Activated B cell treated with CpG ODN at 0.5 μM for 24 hours (primary cell): ENCODE measurements at regions of chr17 and their contacts with region 1.

Region 1: GRCh38 chr17:38421871-38422827 is 6.1 kb upstream of the ARHGAP23 start:
- DNase-seq: no peak
- ATAC-seq: no peak
- H3K4me3 Mint-ChIP-seq: no peak overlapping the region
- H3K27ac Mint-ChIP-seq: no peak overlapping the region
- H3K4me1 Mint-ChIP-seq: peaks cover 8% of the 10 kb centered on the region
- H3K27me3 Mint-ChIP-seq: peaks cover 67% of the 10 kb centered on the region
- CTCF ChIP-seq: no peak

Region 2: GRCh38 chr17:38464723-38465390 is 42.7 kb after region 1 on chr17:
- CTCF ChIA-PET with region 1: no interaction called
- POLR2A ChIA-PET with region 1: no interaction called
- intact Hi-C with region 1: no loop called
- DNase-seq: no peak
- ATAC-seq: no peak
- H3K4me3 Mint-ChIP-seq: no peak overlapping the region
- H3K27ac Mint-ChIP-seq: no peak overlapping the region
- H3K4me1 Mint-ChIP-seq: no peaks in the 10 kb centered on the region
- H3K27me3 Mint-ChIP-seq: peaks cover 8% of the 10 kb centered on the region
- CTCF ChIP-seq: no peak

Region 3: GRCh38 chr17:38498186-38498752 is 76.1 kb after region 1 on chr17:
- CTCF ChIA-PET with region 1: interaction called, 4 read pairs
- POLR2A ChIA-PET with region 1: no interaction called
- intact Hi-C with region 1: loop called (anchors 2 kb)
- DNase-seq: no peak
- ATAC-seq: no peak
- H3K4me3 Mint-ChIP-seq: no peak overlapping the region
- H3K27ac Mint-ChIP-seq: no peak overlapping the region
- H3K4me1 Mint-ChIP-seq: no peaks in the 10 kb centered on the region
- H3K27me3 Mint-ChIP-seq: peaks cover 3% of the 10 kb centered on the region
- CTCF ChIP-seq: no peak